CD8-positive, alpha-beta T cell (primary cell): ENCODE measurements at regions of chr15 and their contacts with region 1.

Region 1: DNA sequence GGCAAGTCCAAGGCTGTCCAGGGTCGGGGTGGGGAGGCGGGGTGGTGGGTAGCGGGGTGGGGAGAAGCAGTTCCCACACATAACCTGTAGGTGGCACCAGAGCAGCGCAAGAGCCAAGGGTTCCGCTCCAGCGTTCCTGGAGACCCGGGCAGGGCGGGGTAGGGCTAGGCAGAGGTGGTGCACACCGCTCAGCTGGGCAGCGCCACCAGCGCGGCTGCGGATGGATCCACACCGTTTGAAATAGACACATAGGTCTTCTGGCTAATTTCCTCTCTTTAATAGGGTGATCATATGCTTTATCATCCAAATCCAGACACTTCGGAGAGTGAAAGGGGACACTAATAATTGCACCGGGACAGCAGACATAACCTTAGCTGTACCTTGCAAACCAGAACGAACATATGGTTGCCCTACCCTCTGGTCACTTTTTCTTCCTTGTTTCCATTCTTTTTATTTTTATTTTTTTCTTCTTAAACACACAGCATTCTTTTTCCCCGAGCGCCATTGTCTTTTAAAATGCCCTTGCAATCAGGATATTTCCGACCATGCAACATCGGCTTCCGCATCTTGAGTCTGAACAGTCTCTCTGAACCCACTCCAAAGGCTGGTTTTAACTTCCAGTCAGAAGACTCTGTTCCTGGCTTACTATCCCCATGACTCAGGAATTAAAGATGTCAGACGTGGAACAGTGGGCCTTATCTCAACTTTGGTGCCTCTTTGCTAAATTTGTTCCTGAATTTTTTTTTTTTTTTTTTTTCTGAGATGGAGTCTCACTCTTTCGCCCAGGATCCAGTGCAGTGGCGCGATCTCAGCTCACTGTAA is 12.5 kb upstream of the ZSCAN2 start:
- DNase-seq: peak; percentile 67 to 90 (median 84)
- ATAC-seq: peak; percentile 100
- H3K4me3 ChIP-seq: no peak overlapping the region
- H3K4me3 Mint-ChIP-seq: peak overlapping the region; percentile 72
- H3K27ac ChIP-seq: no peak overlapping the region
- H3K27ac Mint-ChIP-seq: no peak overlapping the region
- H3K4me1 ChIP-seq: peaks cover 5% of the 10 kb centered on the region
- H3K4me1 Mint-ChIP-seq: peaks cover 3% of the 10 kb centered on the region
- H3K27me3 ChIP-seq: no peaks in the 10 kb centered on the region
- H3K27me3 Mint-ChIP-seq: no peaks in the 10 kb centered on the region
- CTCF ChIP-seq: peak; percentile 76

Region 2: GRCh38 chr15:83815506-83815905 is 772.8 kb before region 1 on chr15:
- CTCF ChIA-PET with region 1: no interaction called
- POLR2A ChIA-PET with region 1: no interaction called
- intact Hi-C with region 1: no loop called
- DNase-seq: no peak
- ATAC-seq: no peak
- H3K4me3 ChIP-seq: no peak overlapping the region
- H3K4me3 Mint-ChIP-seq: no peak overlapping the region
- H3K27ac ChIP-seq: no peak overlapping the region
- H3K27ac Mint-ChIP-seq: no peak overlapping the region
- H3K4me1 ChIP-seq: no peaks in the 10 kb centered on the region
- H3K4me1 Mint-ChIP-seq: no peaks in the 10 kb centered on the region
- H3K27me3 ChIP-seq: no peaks in the 10 kb centered on the region
- H3K27me3 Mint-ChIP-seq: peaks cover 4% of the 10 kb centered on the region
- CTCF ChIP-seq: no peak

Region 3: GRCh38 chr15:83999396-84000135 is 588.7 kb before region 1 on chr15:
- CTCF ChIA-PET with region 1: no interaction called
- POLR2A ChIA-PET with region 1: no interaction called
- intact Hi-C with region 1: no loop called
- DNase-seq: no peak
- ATAC-seq: no peak
- H3K4me3 ChIP-seq: no peak overlapping the region
- H3K4me3 Mint-ChIP-seq: no peak overlapping the region
- H3K27ac ChIP-seq: no peak overlapping the region
- H3K27ac Mint-ChIP-seq: no peak overlapping the region
- H3K4me1 ChIP-seq: no peaks in the 10 kb centered on the region
- H3K4me1 Mint-ChIP-seq: no peaks in the 10 kb centered on the region
- H3K27me3 ChIP-seq: no peaks in the 10 kb centered on the region
- H3K27me3 Mint-ChIP-seq: no peaks in the 10 kb centered on the region
- CTCF ChIP-seq: no peak

Region 4: DNA sequence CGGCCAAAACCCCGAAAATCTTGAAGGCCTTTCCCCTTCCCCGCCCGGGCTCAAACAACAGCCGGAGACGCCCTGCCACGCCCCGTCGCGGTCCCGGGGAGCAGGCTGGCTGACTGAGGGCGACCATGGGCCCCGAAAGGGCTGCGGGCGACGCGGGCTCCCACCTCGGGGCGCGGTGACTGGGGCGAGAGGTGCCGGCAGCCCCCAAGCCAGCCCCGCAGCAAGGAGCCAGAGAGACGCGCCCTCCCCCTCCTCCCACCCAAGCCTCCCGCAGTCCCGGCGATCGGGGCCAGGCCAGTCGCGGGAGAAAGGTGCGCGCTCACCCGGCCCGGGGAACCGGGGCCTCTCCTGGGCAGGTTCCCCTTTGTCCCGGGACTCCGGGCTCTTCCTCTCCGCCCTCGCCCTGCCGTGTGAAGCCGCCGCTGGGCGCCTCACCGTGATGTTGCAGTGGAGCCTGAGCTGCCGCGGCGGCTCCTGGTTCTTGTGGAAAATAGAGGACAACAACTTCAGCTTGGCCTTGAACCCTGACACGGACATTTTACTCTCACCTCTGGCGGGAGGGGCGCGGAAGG is 18.0 kb before region 1 on chr15:
- CTCF ChIA-PET with region 1: interaction called, 22 read pairs
- POLR2A ChIA-PET with region 1: no interaction called
- intact Hi-C with region 1: no loop called
- DNase-seq: peak; percentile 8 to 73 (median 55)
- ATAC-seq: peak; percentile 48
- H3K4me3 ChIP-seq: peak overlapping the region; percentile 73 to 87
- H3K4me3 Mint-ChIP-seq: peak overlapping the region; percentile 86
- H3K27ac ChIP-seq: peak overlapping the region; percentile 57 to 66
- H3K27ac Mint-ChIP-seq: peak overlapping the region; percentile 85
- H3K4me1 ChIP-seq: no peaks in the 10 kb centered on the region
- H3K4me1 Mint-ChIP-seq: peaks cover 11% of the 10 kb centered on the region
- H3K27me3 ChIP-seq: no peaks in the 10 kb centered on the region
- H3K27me3 Mint-ChIP-seq: no peaks in the 10 kb centered on the region
- CTCF ChIP-seq: no peak

Region 5: DNA sequence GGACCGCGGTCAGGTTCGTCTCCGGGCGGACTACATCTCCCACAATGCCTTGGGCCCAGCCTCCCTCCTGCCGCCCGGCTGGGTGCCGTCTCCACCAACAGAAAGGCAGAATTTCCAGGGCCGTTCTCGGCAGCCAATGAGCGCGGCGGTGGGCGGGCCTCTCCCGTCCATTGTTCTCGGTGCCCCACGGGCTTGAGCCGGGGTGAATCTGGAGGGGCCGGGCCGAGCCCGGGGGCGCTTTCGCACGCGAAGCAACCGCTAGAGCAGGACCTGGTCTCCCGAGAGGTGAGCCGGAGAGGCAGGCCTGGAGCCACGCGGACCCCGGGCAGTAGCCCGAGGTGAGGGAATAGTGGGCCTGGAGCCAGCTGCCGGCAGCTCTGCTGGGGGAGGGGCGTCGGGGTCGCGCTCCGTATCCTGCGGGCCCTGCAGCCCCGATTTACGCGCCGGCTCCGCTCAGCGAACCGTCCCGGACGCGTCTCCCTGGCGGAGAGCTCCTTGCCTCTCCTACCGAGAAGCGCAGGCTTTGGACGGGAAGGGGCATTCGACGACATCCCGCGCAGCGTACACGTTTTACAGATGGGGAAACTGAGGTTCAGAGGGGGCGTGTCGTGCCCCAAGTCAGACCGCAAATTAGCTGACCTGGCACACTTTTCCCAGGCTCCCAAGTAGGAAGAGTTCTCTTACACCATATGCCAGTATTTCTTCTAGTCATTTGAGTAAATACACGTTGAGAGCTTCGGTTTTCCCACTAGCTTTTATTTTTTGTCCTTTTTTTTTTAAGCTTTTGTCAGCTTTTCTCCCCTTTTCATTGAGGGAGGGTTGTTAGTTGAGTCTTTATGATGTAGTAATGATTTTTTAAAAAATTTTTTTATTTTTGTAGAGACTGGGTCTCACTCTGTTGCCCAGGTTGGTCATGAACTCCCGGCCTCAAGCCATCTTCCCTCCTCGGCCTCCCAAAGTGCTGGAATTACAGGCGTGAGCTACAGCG is 12.9 kb after region 1 on chr15 and contains the start of gene ZSCAN2:
- CTCF ChIA-PET with region 1: interaction called, 11 read pairs
- POLR2A ChIA-PET with region 1: interaction called, 5 read pairs
- intact Hi-C with region 1: no loop called
- DNase-seq: peak; percentile 81 to 95 (median 92)
- ATAC-seq: peak; percentile 95
- H3K4me3 ChIP-seq: peak within 1 kb of the TSS; percentile 93 to 100
- H3K4me3 Mint-ChIP-seq: peak within 1 kb of the TSS; percentile 99
- H3K27ac ChIP-seq: peak within 1 kb of the TSS; percentile 34 to 58
- H3K27ac Mint-ChIP-seq: peak within 1 kb of the TSS; percentile 93
- H3K4me1 ChIP-seq: peaks cover 42% of the 10 kb centered on the region
- H3K4me1 Mint-ChIP-seq: peaks cover 74% of the 10 kb centered on the region
- H3K27me3 ChIP-seq: no peaks in the 10 kb centered on the region
- H3K27me3 Mint-ChIP-seq: no peaks in the 10 kb centered on the region
- CTCF ChIP-seq: no peak
- total RNA-seq, gene ZSCAN2: 2.7 to 4.4 TPM

Region 6: GRCh38 chr15:84658080-84658787 is 70.0 kb after region 1 on chr15 and contains the start of gene NMB:
- CTCF ChIA-PET with region 1: interaction called, 26 read pairs
- POLR2A ChIA-PET with region 1: interaction called, 7 read pairs
- intact Hi-C with region 1: loop called (anchors 1 to 2 kb)
- DNase-seq: peak; percentile 68 to 93 (median 83)
- ATAC-seq: peak; percentile 66
- H3K4me3 ChIP-seq: peak within 1 kb of the TSS; percentile 58 to 60
- H3K4me3 Mint-ChIP-seq: peak within 1 kb of the TSS; percentile 80
- H3K27ac ChIP-seq: peak within 1 kb of the TSS; percentile 39 to 75
- H3K27ac Mint-ChIP-seq: peak within 1 kb of the TSS; percentile 72
- H3K4me1 ChIP-seq: peaks cover 24% of the 10 kb centered on the region
- H3K4me1 Mint-ChIP-seq: peaks cover 33% of the 10 kb centered on the region
- H3K27me3 ChIP-seq: no peaks in the 10 kb centered on the region
- H3K27me3 Mint-ChIP-seq: no peaks in the 10 kb centered on the region
- CTCF ChIP-seq: peak; percentile 70
- total RNA-seq, gene NMB: 1.8 to 2.0 TPM

Region 7: GRCh38 chr15:84929744-84930371 is 341.6 kb after region 1 on chr15:
- CTCF ChIA-PET with region 1: interaction called, 53 read pairs
- POLR2A ChIA-PET with region 1: no interaction called
- intact Hi-C with region 1: loop called in 1 of 2 experiments (anchors 1 kb)
- DNase-seq: no peak
- ATAC-seq: no peak
- H3K4me3 ChIP-seq: no peak overlapping the region
- H3K4me3 Mint-ChIP-seq: no peak overlapping the region
- H3K27ac ChIP-seq: no peak overlapping the region
- H3K27ac Mint-ChIP-seq: no peak overlapping the region
- H3K4me1 ChIP-seq: no peaks in the 10 kb centered on the region
- H3K4me1 Mint-ChIP-seq: peaks cover 5% of the 10 kb centered on the region
- H3K27me3 ChIP-seq: no peaks in the 10 kb centered on the region
- H3K27me3 Mint-ChIP-seq: no peaks in the 10 kb centered on the region
- CTCF ChIP-seq: no peak